ENCODE measurements at regions of chr4 and their contacts with region 1.

Region 1: DNA sequence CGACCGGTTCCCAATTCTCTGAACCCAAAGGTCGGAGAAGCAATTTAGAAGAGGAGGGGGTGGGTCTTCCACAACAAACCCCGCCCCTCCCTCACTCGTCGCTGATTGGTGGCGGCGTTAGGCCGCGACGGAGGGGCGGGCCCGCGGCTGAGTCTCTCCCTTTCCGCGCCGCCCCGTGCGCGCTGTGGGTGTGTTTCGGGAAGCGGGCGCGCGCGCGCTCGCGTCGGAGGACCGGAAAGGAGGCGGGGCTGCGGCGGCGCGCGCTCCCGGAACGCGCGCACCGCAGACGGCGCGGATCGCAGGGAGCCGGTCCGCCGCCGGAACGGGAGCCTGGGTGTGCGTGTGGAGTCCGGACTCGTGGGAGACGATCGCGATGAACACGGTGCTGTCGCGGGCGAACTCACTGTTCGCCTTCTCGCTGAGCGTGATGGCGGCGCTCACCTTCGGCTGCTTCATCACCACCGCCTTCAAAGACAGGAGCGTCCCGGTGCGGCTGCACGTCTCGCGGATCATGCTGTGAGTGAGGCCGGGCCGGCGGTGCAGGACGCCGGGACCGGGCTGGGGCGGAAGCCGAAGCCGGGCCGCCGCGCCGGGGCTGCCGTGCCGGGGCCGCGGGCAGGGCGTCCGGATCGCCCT is at the start of gene SPCS3:
- DNase-seq: peak; percentile 96
- ATAC-seq: peak; percentile 92
- H3K4me3 Mint-ChIP-seq: peak within 1 kb of the TSS; percentile 91
- H3K27ac Mint-ChIP-seq: peak within 1 kb of the TSS; percentile 96
- H3K4me1 Mint-ChIP-seq: peaks cover 47% of the 10 kb centered on the region
- H3K27me3 Mint-ChIP-seq: no peaks in the 10 kb centered on the region
- CTCF ChIP-seq: no peak
- total RNA-seq, gene SPCS3: 106 and 110 TPM in 2 replicates

Region 2: GRCh38 chr4:176054942-176055341 is 264.9 kb before region 1 on chr4:
- CTCF ChIA-PET with region 1: no interaction called
- POLR2A ChIA-PET with region 1: no interaction called
- intact Hi-C with region 1: loop called (anchors 5 kb)
- DNase-seq: no peak
- ATAC-seq: no peak
- H3K4me3 Mint-ChIP-seq: no peak overlapping the region
- H3K27ac Mint-ChIP-seq: no peak overlapping the region
- H3K4me1 Mint-ChIP-seq: peaks cover 10% of the 10 kb centered on the region
- H3K27me3 Mint-ChIP-seq: no peaks in the 10 kb centered on the region
- CTCF ChIP-seq: no peak

Region 3: DNA sequence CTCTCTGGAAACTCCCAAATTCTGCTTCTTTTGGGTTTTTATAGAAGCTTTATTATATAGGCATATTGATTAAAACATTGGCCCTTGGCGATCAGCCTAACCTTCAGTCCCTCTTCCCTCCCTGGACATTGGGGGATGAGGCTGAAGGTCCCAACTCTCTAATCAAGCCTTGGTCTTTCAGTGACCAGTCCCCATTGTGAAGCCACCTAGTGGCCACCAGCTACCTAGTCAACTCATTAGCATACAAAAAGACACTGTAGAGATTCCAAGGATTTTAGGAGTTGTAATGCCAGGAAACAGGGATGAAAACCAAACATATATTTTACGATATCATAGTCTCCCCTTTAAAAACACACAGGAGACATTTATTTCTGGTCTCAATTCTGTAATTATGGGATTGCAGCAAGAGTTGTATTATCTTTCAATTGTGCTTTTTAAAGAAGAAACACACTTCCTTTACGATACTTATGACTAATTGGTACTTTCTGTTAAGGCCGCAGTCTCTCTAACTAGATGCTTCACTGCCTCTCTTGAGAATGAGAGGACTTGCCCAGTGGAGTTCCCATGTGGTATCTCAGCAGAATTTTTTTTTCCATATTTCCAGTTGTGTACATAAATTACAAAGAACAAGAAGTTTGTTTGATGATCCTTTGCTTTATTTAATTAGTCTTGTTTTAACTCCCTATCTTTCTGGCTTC is 196.0 kb before region 1 on chr4:
- CTCF ChIA-PET with region 1: no interaction called
- POLR2A ChIA-PET with region 1: no interaction called
- intact Hi-C with region 1: loop called (anchors 1 kb)
- DNase-seq: no peak
- ATAC-seq: peak; percentile 96
- H3K4me3 Mint-ChIP-seq: peak overlapping the region; percentile 56
- H3K27ac Mint-ChIP-seq: peak overlapping the region; percentile 67
- H3K4me1 Mint-ChIP-seq: peaks cover 20% of the 10 kb centered on the region
- H3K27me3 Mint-ChIP-seq: no peaks in the 10 kb centered on the region
- CTCF ChIP-seq: no peak

Region 4: GRCh38 chr4:176185067-176185466 is 134.8 kb before region 1 on chr4:
- CTCF ChIA-PET with region 1: no interaction called
- POLR2A ChIA-PET with region 1: no interaction called
- intact Hi-C with region 1: no loop called
- DNase-seq: no peak
- ATAC-seq: no peak
- H3K4me3 Mint-ChIP-seq: no peak overlapping the region
- H3K27ac Mint-ChIP-seq: no peak overlapping the region
- H3K4me1 Mint-ChIP-seq: peaks cover 2% of the 10 kb centered on the region
- H3K27me3 Mint-ChIP-seq: peaks cover 12% of the 10 kb centered on the region
- CTCF ChIP-seq: no peak

Region 5: DNA sequence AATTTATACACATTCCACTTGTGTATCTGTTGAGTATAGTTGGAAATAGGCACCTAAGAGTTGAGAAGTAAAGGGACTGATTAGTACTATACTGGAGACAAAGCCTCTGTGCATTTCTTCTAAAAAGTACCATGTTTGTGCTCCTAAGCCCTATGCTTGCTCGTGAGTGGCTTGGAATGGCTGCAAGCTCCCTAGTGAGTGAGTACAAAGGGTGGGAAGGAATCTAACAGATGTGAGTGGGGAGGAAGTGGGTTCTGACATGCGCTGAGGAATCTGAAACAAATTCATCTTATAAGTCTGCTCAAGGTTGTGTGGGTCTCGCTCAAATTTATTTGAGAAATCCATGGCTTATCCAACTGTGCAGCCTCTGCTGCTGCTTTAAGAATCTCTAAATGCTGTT is 13.3 kb after region 1 on chr4:
- CTCF ChIA-PET with region 1: no interaction called
- POLR2A ChIA-PET with region 1: interaction called, 3 read pairs
- intact Hi-C with region 1: loop called (anchors 1 kb)
- DNase-seq: no peak
- ATAC-seq: no peak
- H3K4me3 Mint-ChIP-seq: no peak overlapping the region
- H3K27ac Mint-ChIP-seq: no peak overlapping the region
- H3K4me1 Mint-ChIP-seq: peaks cover 2% of the 10 kb centered on the region
- H3K27me3 Mint-ChIP-seq: no peaks in the 10 kb centered on the region
- CTCF ChIP-seq: no peak

Region 6: DNA sequence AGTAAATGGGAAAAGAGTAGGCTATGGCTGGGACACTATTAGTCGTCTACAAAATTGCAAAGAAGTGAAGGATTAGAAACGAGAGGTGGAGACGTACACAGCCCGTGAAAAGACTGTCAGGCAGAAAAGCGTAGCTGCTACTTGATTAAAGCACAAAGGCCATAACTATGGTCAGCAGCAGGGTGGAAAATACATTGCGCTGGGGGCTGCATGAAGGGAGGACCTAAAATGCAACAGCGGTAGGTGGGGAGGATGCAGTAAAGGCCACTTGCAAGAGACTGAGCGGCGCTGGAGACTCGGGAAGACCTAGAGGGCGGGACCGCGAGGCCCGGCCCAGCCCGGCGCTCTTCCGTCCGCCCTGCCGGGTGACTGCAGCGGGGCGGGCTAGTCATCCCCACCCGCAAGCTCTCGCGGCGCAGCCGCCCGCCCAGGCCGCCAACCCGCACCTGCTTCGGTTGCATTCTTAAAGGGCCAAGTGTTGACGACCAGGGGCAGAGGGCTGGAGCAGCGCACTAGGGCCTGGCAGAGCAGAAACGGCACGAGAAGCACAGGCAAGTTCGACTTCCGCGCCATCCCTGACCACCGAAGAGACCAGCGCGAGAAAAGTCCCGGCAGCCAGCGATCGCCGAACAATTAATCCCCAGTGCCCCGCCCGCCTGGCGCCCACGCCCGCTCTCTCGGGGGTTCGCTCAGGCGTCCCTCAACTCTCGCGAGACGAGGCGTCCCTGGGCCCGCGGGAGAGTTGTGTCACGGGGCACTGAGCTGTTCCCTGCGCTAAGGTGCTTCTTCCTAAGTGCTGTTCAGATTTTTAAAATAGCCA is 1122.2 kb after region 1 on chr4 and contains the start of gene AGA:
- CTCF ChIA-PET with region 1: no interaction called
- POLR2A ChIA-PET with region 1: interaction called, 3 read pairs
- intact Hi-C with region 1: loop called (anchors 2 kb)
- DNase-seq: peak; percentile 90
- ATAC-seq: peak; percentile 91
- H3K4me3 Mint-ChIP-seq: peak within 1 kb of the TSS; percentile 86
- H3K27ac Mint-ChIP-seq: peak within 1 kb of the TSS; percentile 91
- H3K4me1 Mint-ChIP-seq: peaks cover 23% of the 10 kb centered on the region
- H3K27me3 Mint-ChIP-seq: no peaks in the 10 kb centered on the region
- CTCF ChIP-seq: no peak
- total RNA-seq, gene AGA: 27.7 and 31.1 TPM in 2 replicates

Measured in activated B cell treated with CpG ODN at 0.5 μM for 24 hours (primary cell).